ENCODE measurements at regions of chr17 and their contacts with region 1.

Region 1: DNA sequence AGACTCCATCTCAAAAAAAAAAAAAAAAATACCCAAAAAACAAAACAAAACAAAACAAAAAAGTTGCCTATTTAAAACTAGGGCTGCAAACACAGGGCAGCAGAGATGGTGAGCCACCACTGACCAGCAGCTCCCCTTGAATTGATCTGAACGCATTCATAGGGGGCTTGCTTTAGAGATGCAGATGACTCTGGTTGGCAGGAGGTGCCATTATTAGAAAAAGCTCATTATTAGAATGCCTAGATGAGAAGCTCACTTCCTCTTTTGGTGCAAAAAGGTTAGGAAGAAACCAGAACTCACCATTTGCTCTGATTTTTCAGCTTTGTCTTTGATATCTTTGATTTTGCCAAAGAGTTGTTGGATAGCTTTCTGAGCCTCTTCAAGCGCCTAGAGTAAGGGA is 53.1 kb downstream of the VPS53 start:
- DNase-seq: no peak
- H3K4me3 ChIP-seq: no peak overlapping the region
- H3K27ac ChIP-seq: no peak overlapping the region
- H3K4me1 ChIP-seq: no peaks in the 10 kb centered on the region
- H3K27me3 ChIP-seq: no peaks in the 10 kb centered on the region
- CTCF ChIP-seq: no peak

Region 2: GRCh38 chr17:574061-574460 is 87.4 kb before region 1 on chr17:
- CTCF ChIA-PET with region 1: no interaction called
- POLR2A ChIA-PET with region 1: no interaction called
- intact Hi-C with region 1: no loop called
- DNase-seq: no peak
- H3K4me3 ChIP-seq: no peak overlapping the region
- H3K27ac ChIP-seq: no peak overlapping the region
- H3K4me1 ChIP-seq: no peaks in the 10 kb centered on the region
- H3K27me3 ChIP-seq: no peaks in the 10 kb centered on the region
- CTCF ChIP-seq: no peak

Region 3: GRCh38 chr17:676060-676700 is 14.7 kb after region 1 on chr17:
- CTCF ChIA-PET with region 1: no interaction called
- POLR2A ChIA-PET with region 1: interaction called, 20 read pairs
- intact Hi-C with region 1: no loop called
- DNase-seq: no peak
- H3K4me3 ChIP-seq: no peak overlapping the region
- H3K27ac ChIP-seq: no peak overlapping the region
- H3K4me1 ChIP-seq: no peaks in the 10 kb centered on the region
- H3K27me3 ChIP-seq: no peaks in the 10 kb centered on the region
- CTCF ChIP-seq: no peak